ENCODE measurements at regions of chr3 and their contacts with region 1.

Region 1: GRCh38 chr3:32177702-32178198 is 60.7 kb upstream of the CMTM8 start:
- DNase-seq: no peak

Region 2: DNA sequence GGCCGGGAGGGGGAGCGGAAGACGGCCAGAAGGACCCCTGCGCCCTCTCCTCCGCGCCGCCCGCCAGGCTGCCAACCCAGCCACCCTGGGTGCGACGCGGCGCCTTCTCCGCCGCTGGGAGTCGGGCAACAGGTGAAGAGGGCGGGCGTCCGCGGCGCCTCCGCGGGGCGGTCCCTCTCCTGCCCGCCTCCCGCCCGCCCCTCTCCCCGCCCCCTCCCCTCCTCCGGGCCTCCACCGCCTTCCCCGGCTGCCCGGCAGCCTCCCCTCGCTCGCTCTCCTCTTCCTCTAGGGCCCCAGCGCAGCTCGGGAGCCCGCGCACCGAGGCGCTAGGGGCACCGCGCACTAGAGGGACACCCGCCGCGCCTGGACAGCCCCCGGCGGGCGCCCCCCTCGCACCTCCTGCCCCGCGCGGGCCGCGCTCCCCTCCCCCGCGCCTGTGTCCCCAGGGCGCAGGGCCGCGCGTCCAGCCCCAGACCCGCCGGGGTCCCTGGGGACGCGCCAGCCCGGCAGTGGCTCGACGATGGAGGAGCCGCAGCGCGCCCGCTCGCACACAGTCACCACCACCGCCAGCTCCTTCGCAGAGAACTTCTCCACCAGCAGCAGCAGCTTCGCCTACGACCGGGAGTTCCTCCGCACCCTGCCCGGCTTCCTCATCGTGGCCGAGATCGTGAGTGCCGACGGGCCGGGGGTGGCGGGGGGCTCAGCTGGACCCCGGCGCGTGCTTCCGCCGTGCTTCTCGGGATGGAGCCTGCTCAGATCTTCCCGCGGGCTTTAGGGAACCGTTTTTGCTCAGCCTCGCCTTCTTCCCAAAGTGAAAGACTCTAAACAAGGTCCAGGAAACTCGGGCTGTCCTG is 60.9 kb after region 1 on chr3 and contains the start of gene CMTM8:
- intact Hi-C with region 1: loop called (anchors 2 kb)
- DNase-seq: peak; percentile 77
- total RNA-seq, gene CMTM8: 5.5 TPM

Region 3: DNA sequence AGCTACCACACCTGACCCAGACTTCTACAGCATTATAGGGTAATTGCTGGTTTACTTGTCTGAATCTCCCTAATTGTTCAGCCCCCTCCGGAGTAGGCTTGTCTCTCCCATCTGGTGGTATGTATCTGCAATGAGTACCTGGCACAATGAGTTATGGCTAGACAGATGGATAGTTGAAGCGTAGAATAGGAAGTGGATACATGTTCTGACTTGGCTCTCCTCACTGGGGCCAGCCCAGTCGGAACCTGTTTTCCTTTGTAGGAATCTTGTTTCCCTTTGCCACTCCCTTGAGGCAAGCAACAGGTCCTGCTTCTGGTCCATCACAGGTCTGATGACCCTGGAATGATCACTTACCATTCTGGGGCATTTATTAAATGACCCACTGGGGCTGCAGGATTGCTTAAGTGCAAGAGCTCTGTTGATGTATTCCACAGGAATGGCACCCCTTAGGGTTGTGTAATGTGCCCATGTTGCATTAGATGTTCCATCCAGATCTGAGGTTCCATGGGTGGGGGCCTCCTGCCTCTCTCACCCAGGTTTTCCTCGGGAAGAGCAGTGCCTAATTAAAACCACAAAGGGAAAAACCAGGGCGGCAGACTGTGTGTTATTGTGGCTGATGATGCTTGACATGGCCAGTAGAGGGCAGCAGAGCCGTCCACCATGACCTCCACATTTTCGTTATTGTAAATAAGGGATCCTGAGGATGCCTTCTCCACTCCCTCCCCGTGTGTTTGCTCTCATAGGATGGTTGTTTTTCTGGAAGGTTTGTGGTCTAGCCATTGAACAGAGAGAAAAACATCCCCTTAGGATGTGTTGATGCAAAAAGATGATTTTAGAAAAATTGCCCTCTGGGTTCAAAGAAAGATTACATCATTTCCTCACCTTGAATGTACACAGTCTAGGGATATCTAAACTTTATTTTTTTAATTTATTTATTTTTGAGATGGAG is 118.8 kb after region 1 on chr3:
- intact Hi-C with region 1: loop called (anchors 5 kb)
- DNase-seq: peak; percentile 80

Region 4: GRCh38 chr3:32340039-32340438 is 162.3 kb after region 1 on chr3:
- intact Hi-C with region 1: loop called (anchors 1 kb)
- DNase-seq: no peak

Region 5: GRCh38 chr3:32401556-32402081 is 223.9 kb after region 1 on chr3:
- intact Hi-C with region 1: loop called (anchors 5 kb)
- DNase-seq: peak; percentile 90

Region 6: GRCh38 chr3:32467333-32468070 is 289.8 kb after region 1 on chr3:
- intact Hi-C with region 1: loop called (anchors 5 kb)
- DNase-seq: peak; percentile 91